ENCODE measurements at regions of chr18 and their contacts with region 1.

Region 1: GRCh38 chr18:74196220-74197119 is 48.1 kb downstream of the TIMM21 start:
- DNase-seq: no peak
- ATAC-seq: peak; percentile 86

Region 2: GRCh38 chr18:74342416-74343043 is 146.1 kb after region 1 on chr18:
- intact Hi-C with region 1: loop called (anchors 5 kb)
- DNase-seq: no peak
- ATAC-seq: peak; percentile 57

Region 3: DNA sequence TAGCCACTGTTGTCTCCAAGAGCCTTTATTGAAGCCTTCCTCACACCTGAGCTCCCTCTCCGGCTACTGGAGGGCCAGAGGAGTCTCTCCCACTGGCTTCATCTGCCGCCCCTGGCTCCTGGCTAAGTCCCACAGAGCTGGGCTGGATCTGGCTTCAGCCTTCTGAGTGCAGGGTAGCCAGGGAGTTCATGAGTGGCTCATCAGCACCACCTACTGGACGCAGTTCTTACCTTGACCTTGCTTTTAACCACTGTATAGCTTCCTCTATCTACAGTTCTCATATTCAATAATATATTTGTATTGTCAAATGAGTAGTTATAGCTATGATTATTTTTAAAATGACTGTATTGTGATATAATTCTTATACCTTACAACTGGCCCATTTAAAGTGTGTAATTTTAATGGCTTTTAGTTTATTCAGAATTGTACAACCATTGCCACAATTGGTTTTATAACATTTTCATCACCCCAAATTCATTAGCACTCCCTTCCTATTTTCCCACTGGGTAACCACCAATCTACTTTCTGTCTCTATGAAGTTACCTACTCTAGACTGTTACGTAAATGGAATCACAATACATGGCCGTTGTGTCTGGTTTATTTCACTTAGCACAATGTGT is 355.6 kb after region 1 on chr18:
- intact Hi-C with region 1: loop called (anchors 2 kb)
- DNase-seq: peak; percentile 79
- ATAC-seq: peak; percentile 98